ENCODE measurements at regions of chr3 and their contacts with region 1.

Region 1: DNA sequence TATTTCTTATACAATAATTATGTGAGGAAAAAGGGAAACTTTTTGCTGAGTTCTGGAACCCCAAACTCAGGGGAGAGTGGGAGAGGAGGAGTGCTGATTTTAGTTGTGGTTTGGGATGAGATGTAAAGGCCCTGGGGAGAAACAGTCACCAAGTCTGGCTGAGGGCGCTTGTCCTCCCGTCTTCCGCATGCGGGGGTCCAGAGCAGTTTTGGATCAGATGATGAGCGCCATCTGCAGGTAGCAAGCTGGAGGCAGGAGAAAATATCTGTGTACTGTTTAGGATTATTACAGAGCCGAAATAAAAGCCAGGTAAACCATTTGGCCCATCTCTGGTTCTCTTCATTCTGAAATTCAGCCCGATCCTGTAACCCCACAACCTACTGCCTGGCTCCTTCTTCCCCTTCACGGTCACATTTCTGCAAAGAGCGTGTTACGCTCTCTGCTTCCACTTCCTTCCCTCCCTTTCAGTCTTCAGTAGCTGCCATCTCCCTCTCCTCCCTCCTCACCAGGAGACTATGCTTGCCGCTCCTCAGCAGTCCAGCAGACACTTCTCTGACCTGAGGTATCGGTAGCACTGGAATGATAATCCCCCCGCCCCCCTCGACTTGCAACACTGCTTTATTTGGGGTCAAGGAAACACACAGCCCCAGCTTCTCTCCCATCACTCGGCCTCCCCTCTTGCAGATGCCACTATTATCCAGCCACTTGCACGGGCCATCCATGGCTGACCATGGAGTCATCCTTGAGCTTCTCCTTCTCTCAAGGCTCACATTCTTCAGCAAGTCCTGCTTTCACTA is 1.4 kb upstream of the PARP14 start:
- DNase-seq: peak; percentile 14
- H3K4me3 ChIP-seq: peak overlapping the region; percentile 38
- CTCF ChIP-seq: peak; percentile 78

Region 2: DNA sequence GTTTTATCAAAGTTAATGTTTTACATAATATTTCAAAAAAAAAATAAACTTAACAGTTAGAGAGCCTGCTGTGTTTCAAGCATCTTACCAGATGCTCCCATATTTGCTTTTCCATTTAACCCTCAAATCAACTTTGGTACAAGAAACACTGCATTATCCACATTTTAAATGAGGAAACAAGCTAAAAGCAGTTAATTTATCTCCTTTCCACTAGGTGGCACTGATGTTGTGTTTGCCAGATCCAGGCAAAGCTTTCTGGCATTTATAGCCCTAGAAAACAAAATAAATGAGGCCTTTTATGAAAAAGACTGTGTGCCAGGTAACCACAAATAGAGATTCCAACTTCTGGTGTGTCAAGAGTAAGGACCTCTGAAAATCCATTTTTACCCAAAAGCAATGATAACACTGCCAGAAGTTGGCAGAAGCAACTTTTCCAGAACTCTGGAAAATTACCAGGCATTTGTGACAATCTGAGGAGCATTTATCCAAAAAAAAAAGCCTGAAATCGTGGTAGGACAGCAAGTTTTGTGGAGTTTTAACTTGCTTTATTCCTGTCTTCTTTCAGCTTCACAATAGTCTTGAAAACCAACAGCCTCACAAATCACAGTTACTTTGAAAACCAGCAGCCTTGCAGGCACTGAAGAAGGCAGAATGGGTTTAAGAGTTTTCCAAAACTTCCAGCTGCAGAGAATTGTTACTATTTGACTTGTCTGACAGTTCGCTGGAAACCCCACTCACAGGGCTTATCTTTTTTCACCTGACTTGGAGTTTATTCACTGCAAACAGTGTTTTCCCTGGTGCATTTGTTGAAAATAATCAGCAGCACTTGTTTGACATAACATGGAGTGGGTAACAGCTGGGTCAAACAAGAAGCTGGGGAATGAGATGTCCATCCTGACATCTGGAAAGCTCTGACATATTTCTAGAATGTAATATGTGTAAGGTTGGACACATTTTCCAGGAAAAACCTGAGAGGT is 286.1 kb before region 1 on chr3:
- CTCF ChIA-PET with region 1: interaction called, 71 read pairs
- POLR2A ChIA-PET with region 1: interaction called, 4 read pairs
- DNase-seq: no peak
- H3K4me3 ChIP-seq: no peak overlapping the region
- CTCF ChIP-seq: peak; percentile 45

Region 3: DNA sequence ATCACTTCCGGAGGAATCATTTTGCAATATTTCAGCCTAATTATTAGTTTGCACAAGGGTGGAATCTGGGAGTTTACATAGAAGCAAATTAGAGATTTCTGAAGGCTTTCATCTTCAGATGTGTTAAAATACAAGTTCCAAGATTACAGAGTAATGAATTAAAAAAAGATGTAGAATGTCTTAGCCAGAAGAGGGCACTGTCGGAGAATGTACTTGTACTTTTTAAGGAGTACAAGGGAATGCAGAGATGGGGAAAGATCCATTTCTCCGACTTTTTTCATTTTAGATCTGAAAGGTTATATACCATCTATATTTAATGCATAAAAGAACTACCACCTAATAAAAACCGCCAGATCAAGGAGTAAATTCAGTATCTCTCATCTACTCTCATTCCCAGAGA is 220.3 kb before region 1 on chr3:
- CTCF ChIA-PET with region 1: interaction called, 76 read pairs
- POLR2A ChIA-PET with region 1: no interaction called
- DNase-seq: peak; percentile 12
- H3K4me3 ChIP-seq: no peak overlapping the region
- CTCF ChIP-seq: peak; percentile 26

Region 4: DNA sequence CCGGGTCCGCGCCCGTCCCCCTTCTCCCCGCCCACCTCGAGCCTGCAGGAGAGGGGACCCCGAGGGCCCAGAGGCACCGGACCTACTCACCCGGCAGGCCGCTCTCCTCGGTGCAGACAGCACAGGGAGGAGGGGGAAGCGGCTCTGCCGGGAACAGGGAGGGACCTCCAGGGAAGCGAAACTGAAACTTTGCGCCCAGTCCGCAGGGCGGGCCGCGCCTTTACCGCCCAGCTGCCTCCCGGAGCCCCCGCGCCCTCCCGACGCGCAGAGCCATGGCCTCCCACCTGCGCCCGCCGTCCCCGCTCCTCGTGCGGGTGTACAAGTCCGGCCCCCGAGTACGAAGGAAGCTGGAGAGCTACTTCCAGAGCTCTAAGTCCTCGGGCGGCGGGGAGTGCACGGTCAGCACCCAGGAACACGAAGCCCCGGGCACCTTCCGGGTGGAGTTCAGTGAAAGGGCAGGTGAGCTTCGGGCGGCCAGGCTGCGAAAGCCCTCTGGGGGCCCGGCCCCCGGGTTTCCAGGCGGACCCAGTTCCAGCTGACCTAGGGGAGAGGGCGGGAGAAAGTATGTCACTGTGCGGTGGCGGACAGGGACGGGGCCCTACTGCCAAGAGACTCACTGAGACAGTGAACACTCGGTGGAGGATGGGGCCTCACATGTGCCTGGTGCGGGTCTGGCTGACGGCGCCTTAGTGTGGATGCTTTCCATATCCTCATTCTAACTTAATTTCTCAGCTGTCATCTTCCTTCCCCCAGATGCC is 114.9 kb before region 1 on chr3 and contains the starts of genes DTX3L and PARP9:
- CTCF ChIA-PET with region 1: interaction called, 181 read pairs
- POLR2A ChIA-PET with region 1: interaction called, 6 read pairs
- DNase-seq: no peak
- H3K4me3 ChIP-seq: peak within 1 kb of the TSS; percentile 77
- CTCF ChIP-seq: no peak

Region 5: GRCh38 chr3:122689587-122689986 is 10.3 kb after region 1 on chr3:
- CTCF ChIA-PET with region 1: interaction called, 16 read pairs
- POLR2A ChIA-PET with region 1: no interaction called
- DNase-seq: no peak
- H3K4me3 ChIP-seq: no peak overlapping the region
- CTCF ChIP-seq: no peak